ENCODE measurements at regions of chr9 and their contacts with region 1.

Region 1: GRCh38 chr9:94166237-94166963 is 82.1 kb downstream of the PTPDC1 start:
- DNase-seq: peak; percentile 98

Region 2: GRCh38 chr9:93843396-93843795 is 323.0 kb before region 1 on chr9:
- intact Hi-C with region 1: no loop called
- DNase-seq: no peak

Region 3: GRCh38 chr9:94030318-94031179 is 135.9 kb before region 1 on chr9:
- intact Hi-C with region 1: loop called (anchors 2 kb)
- DNase-seq: peak; percentile 94

Region 4: DNA sequence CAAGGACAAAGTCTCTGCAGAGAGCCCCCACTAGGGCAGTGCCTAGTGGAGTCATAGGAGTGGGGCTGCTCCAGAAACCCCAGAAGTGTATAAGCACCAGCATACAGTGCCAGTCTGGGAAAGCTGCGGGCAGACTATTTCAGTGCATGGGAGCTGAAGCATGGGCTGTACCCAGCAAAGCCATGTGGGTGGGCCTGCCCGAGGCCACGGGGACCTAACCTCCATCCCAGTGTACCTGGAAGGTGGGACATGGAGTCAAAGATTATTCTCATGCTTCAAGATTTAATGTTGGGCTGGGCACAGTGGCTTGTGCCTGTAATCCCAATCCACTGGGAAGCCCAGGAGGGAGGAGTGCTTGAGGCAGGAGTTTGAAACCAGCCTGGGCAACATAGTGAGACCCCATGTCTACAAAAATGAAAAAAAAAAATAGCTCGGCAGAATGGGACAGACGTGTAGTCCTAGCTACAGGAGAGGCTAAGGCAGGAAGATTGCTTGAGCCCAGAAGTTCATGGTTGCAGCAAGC is 45.5 kb before region 1 on chr9:
- intact Hi-C with region 1: no loop called
- DNase-seq: no peak

Region 5: DNA sequence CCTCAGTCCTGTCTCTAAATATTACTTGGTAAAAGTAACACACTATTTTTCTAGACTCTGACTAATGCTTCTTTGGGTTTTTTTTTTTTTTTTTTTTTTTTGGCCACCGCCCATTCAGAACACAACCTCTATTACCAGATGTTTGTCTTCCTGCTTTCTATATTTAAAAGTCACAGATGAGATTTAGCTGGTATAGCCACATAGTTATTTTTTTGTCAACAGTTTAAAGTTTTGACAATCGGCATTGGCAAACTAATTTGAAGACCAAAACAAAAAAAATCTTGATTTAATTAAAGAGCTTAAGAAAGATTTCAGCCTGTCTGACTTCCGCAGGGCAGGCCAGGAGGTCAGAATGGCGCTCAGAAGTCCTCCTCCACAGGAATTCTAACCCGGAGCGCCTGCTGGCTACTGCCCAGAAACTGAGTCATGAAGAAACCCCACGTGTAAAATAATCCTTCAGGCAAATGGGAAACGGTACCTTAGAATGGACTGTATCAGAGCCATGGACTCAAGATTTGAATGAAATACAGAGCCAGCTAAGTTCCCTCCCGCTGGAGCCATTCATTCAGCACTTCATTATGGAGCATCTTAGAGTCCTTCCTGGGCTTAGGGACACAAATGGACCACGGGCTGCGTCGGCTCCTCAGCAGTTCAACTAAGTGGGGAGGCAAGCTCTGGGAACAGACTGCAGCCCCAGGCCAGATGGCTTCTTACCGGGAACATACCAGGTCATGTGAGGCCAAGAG is 26.6 kb before region 1 on chr9:
- intact Hi-C with region 1: loop called (anchors 1 kb)
- DNase-seq: peak; percentile 91

Measured in cardiac septum (tissue), 1 donor.